ENCODE measurements at regions of chr15 and their contacts with region 1.

Region 1: GRCh38 chr15:74127260-74127953 is 3.0 kb upstream of the ISLR2 start:
- DNase-seq: peak; percentile 46 to 65 (median 49)
- H3K4me3 ChIP-seq: peak overlapping the region in 1 of 3 experiments; percentile 43
- H3K4me3 Mint-ChIP-seq: peak overlapping the region in 1 of 2 donors; percentile 63
- H3K27ac ChIP-seq: no peak overlapping the region
- H3K27ac Mint-ChIP-seq: no peak overlapping the region
- H3K4me1 ChIP-seq: peaks cover 7 to 8% of the 10 kb centered on the region in 2 donors
- H3K4me1 Mint-ChIP-seq: peaks cover 13% of the 10 kb centered on the region
- H3K27me3 ChIP-seq: peaks cover 28 to 67% of the 10 kb centered on the region in 2 donors
- H3K27me3 Mint-ChIP-seq: peaks cover 71 to 80% (median 80%) of the 10 kb centered on the region in 3 donors
- CTCF ChIP-seq: peak; percentile 98

Region 2: GRCh38 chr15:74062671-74063070 is 64.7 kb before region 1 on chr15:
- intact Hi-C with region 1: no loop called
- DNase-seq: no peak
- H3K4me3 ChIP-seq: no peak overlapping the region
- H3K4me3 Mint-ChIP-seq: no peak overlapping the region
- H3K27ac ChIP-seq: no peak overlapping the region
- H3K27ac Mint-ChIP-seq: no peak overlapping the region
- H3K4me1 ChIP-seq: no peaks in the 10 kb centered on the region
- H3K4me1 Mint-ChIP-seq: no peaks in the 10 kb centered on the region
- H3K27me3 ChIP-seq: no peaks in the 10 kb centered on the region
- H3K27me3 Mint-ChIP-seq: peaks cover 0 to 4% (median 2%) of the 10 kb centered on the region in 3 donors
- CTCF ChIP-seq: no peak

Region 3: GRCh38 chr15:74322181-74323076 is 195.0 kb after region 1 on chr15:
- intact Hi-C with region 1: loop called (anchors 5 kb)
- DNase-seq: peak; percentile 7 to 32 (median 12)
- H3K4me3 ChIP-seq: no peak overlapping the region
- H3K4me3 Mint-ChIP-seq: no peak overlapping the region
- H3K27ac ChIP-seq: no peak overlapping the region
- H3K27ac Mint-ChIP-seq: no peak overlapping the region
- H3K4me1 ChIP-seq: peaks cover 0 to 15% of the 10 kb centered on the region in 2 donors
- H3K4me1 Mint-ChIP-seq: peaks cover 4% of the 10 kb centered on the region
- H3K27me3 ChIP-seq: no peaks in the 10 kb centered on the region
- H3K27me3 Mint-ChIP-seq: peaks cover 6 to 12% (median 8%) of the 10 kb centered on the region in 3 donors
- CTCF ChIP-seq: peak; percentile 65